Ovary (tissue), 10 donors: ENCODE measurements at regions of chr10 and their contacts with region 1.

Region 1: GRCh38 chr10:18659120-18659818 is at the start of gene ARL5B:
- DNase-seq: peak; percentile 97 to 99 (median 98)
- H3K4me3 ChIP-seq: peak within 1 kb of the TSS; percentile 76
- H3K27ac ChIP-seq: peak within 1 kb of the TSS; percentile 95 to 97
- H3K4me1 ChIP-seq: peaks cover 8% of the 10 kb centered on the region
- H3K27me3 ChIP-seq: no peaks in the 10 kb centered on the region
- CTCF ChIP-seq: no peak
- EP300 ChIP-seq: peak; percentile 97
- POLR2A ChIP-seq: peak; percentile 87
- total RNA-seq, gene ARL5B: 10.5 to 19.1 (median 13.0) TPM

Region 2: DNA sequence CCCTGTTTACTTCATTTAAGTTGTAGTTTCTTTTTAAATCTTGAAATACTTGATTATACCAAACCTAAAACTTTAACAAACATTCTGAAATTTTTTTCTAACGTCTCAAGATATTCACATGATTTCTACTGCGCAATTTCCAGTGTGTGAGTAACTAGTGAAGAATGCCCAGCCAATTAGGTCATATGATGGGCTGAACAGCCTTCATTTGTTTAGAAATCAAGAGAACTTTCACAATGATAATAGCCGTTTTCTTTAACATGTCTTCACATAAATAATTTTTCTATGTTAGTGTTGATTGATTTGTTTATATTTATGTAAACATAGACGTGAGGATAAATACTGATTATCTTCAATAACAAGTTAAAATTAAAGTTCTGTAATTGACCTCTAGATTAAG is 993.5 kb before region 1 on chr10:
- intact Hi-C with region 1: loop called in 1 of 4 experiments (anchors 10 kb)
- DNase-seq: peak in 2 of 5 donors; percentile 21 to 53
- H3K4me3 ChIP-seq: no peak overlapping the region
- H3K27ac ChIP-seq: peak overlapping the region; percentile 53 to 65
- H3K4me1 ChIP-seq: peaks cover 4% of the 10 kb centered on the region
- H3K27me3 ChIP-seq: no peaks in the 10 kb centered on the region
- CTCF ChIP-seq: no peak
- EP300 ChIP-seq: no peak
- POLR2A ChIP-seq: no peak